ENCODE measurements at regions of chr4 and their contacts with region 1.

Region 1: DNA sequence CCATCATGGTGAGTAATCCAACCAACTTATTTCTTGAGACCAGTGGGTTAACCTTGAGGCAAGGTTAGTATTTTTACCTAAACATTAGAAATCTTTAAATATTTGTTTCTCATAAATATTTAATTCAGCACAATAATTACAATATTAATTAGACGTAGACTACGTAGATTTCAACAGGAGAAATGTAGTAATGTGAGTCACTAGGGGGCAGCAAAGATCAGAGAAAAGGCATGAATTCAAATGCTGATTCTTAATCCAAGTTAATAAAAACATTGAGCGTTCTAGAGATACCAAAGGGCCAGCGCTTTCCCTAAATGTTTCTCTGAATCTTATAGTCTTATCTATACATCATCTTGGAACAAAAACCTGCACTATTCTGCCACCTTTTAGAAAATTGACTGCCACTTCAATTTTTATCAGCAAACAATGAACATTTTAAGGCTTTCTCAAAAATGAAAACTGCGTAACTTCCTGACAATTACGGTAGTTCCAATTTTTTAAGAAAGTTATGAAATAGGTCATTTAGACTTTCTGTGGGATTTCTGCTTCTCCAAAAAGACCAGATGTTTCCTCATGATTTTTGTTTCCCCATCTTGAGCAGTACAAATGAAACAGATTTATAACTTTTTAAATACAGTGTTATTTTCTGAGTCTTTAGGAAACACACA is 180.7 kb downstream of the GASK1B start:
- DNase-seq: peak; percentile 37
- ATAC-seq: no peak
- H3K4me3 Mint-ChIP-seq: no peak overlapping the region
- H3K27ac Mint-ChIP-seq: no peak overlapping the region
- H3K4me1 Mint-ChIP-seq: peaks cover 3% of the 10 kb centered on the region
- H3K27me3 Mint-ChIP-seq: peaks cover 2% of the 10 kb centered on the region
- CTCF ChIP-seq: peak; percentile 73

Region 2: GRCh38 chr4:158006990-158007389 is 14.8 kb after region 1 on chr4:
- CTCF ChIA-PET with region 1: no interaction called
- POLR2A ChIA-PET with region 1: no interaction called
- intact Hi-C with region 1: no loop called
- DNase-seq: no peak
- ATAC-seq: no peak
- H3K4me3 Mint-ChIP-seq: no peak overlapping the region
- H3K27ac Mint-ChIP-seq: no peak overlapping the region
- H3K4me1 Mint-ChIP-seq: no peaks in the 10 kb centered on the region
- H3K27me3 Mint-ChIP-seq: no peaks in the 10 kb centered on the region
- CTCF ChIP-seq: no peak

Region 3: DNA sequence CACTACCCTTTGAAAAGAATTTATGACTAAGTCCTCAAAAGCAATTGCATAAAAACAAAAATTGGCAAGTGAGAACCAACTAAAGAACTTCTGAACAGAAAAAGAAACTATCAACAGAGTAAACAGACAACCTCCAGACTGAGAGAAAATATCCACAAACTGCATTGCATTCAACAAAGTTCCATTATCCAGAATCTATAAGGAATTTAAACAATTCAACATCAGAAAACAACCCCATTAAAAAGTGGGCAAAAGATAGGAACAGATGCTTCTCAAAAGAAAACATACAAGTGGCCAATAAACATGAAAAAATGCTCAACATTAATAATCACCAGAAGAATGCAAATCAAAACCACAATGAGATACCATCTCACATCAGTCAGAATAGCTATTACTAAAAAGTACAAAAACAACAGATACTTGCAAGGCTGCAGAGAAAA is 50.4 kb after region 1 on chr4:
- CTCF ChIA-PET with region 1: no interaction called
- POLR2A ChIA-PET with region 1: no interaction called
- intact Hi-C with region 1: no loop called
- DNase-seq: no peak
- ATAC-seq: no peak
- H3K4me3 Mint-ChIP-seq: no peak overlapping the region
- H3K27ac Mint-ChIP-seq: no peak overlapping the region
- H3K4me1 Mint-ChIP-seq: no peaks in the 10 kb centered on the region
- H3K27me3 Mint-ChIP-seq: no peaks in the 10 kb centered on the region
- CTCF ChIP-seq: no peak

Region 4: GRCh38 chr4:158172261-158173258 is 180.4 kb after region 1 on chr4 and contains the start of gene GASK1B:
- CTCF ChIA-PET with region 1: interaction called, 5 read pairs
- POLR2A ChIA-PET with region 1: no interaction called
- intact Hi-C with region 1: loop called (anchors 2 kb)
- DNase-seq: peak; percentile 41
- ATAC-seq: no peak
- H3K4me3 Mint-ChIP-seq: no peak within 1 kb of the TSS
- H3K27ac Mint-ChIP-seq: no peak within 1 kb of the TSS
- H3K4me1 Mint-ChIP-seq: no peaks in the 10 kb centered on the region
- H3K27me3 Mint-ChIP-seq: peaks cover 35% of the 10 kb centered on the region
- CTCF ChIP-seq: peak; percentile 54
- total RNA-seq, gene GASK1B: not detected

Region 5: GRCh38 chr4:158253350-158253980 is 261.3 kb after region 1 on chr4:
- CTCF ChIA-PET with region 1: no interaction called
- POLR2A ChIA-PET with region 1: no interaction called
- intact Hi-C with region 1: loop called (anchors 5 kb)
- DNase-seq: peak; percentile 66
- ATAC-seq: peak; percentile 66
- H3K4me3 Mint-ChIP-seq: no peak overlapping the region
- H3K27ac Mint-ChIP-seq: no peak overlapping the region
- H3K4me1 Mint-ChIP-seq: no peaks in the 10 kb centered on the region
- H3K27me3 Mint-ChIP-seq: peaks cover 9% of the 10 kb centered on the region
- CTCF ChIP-seq: peak; percentile 66

Measured in activated CD8-positive, alpha-beta T cell treated with anti-CD3 and anti-CD28 coated beads for 36 hours (primary cell).